Activated B cell treated with CpG ODN at 0.5 μM for 24 hours (primary cell): ENCODE measurements at regions of chr20 and their contacts with region 1.

Region 1: GRCh38 chr20:56400090-56400542 is 7.7 kb downstream of the CSTF1 start:
- DNase-seq: no peak
- ATAC-seq: peak; percentile 65
- H3K4me3 Mint-ChIP-seq: no peak overlapping the region
- H3K27ac Mint-ChIP-seq: no peak overlapping the region
- H3K4me1 Mint-ChIP-seq: peaks cover 15% of the 10 kb centered on the region
- H3K27me3 Mint-ChIP-seq: no peaks in the 10 kb centered on the region
- CTCF ChIP-seq: peak; percentile 47

Region 2: GRCh38 chr20:56247948-56248782 is 152.0 kb before region 1 on chr20 and contains the start of gene MC3R:
- CTCF ChIA-PET with region 1: no interaction called
- POLR2A ChIA-PET with region 1: no interaction called
- intact Hi-C with region 1: no loop called
- DNase-seq: no peak
- ATAC-seq: no peak
- H3K4me3 Mint-ChIP-seq: no peak within 1 kb of the TSS
- H3K27ac Mint-ChIP-seq: no peak within 1 kb of the TSS
- H3K4me1 Mint-ChIP-seq: no peaks in the 10 kb centered on the region
- H3K27me3 Mint-ChIP-seq: peaks cover 32% of the 10 kb centered on the region
- CTCF ChIP-seq: no peak
- total RNA-seq, gene MC3R: not detected in 2 replicates

Region 3: GRCh38 chr20:56373940-56374339 is 26.2 kb before region 1 on chr20:
- CTCF ChIA-PET with region 1: no interaction called
- POLR2A ChIA-PET with region 1: no interaction called
- intact Hi-C with region 1: no loop called
- DNase-seq: no peak
- ATAC-seq: no peak
- H3K4me3 Mint-ChIP-seq: no peak overlapping the region
- H3K27ac Mint-ChIP-seq: no peak overlapping the region
- H3K4me1 Mint-ChIP-seq: no peaks in the 10 kb centered on the region
- H3K27me3 Mint-ChIP-seq: no peaks in the 10 kb centered on the region
- CTCF ChIP-seq: no peak

Region 4: GRCh38 chr20:56504373-56505005 is 104.4 kb after region 1 on chr20:
- CTCF ChIA-PET with region 1: no interaction called
- POLR2A ChIA-PET with region 1: no interaction called
- intact Hi-C with region 1: loop called (anchors 1 kb)
- DNase-seq: no peak
- ATAC-seq: no peak
- H3K4me3 Mint-ChIP-seq: no peak overlapping the region
- H3K27ac Mint-ChIP-seq: no peak overlapping the region
- H3K4me1 Mint-ChIP-seq: no peaks in the 10 kb centered on the region
- H3K27me3 Mint-ChIP-seq: no peaks in the 10 kb centered on the region
- CTCF ChIP-seq: no peak

Region 5: GRCh38 chr20:56702931-56703719 is 303.0 kb after region 1 on chr20:
- CTCF ChIA-PET with region 1: no interaction called
- POLR2A ChIA-PET with region 1: no interaction called
- intact Hi-C with region 1: no loop called
- DNase-seq: no peak
- ATAC-seq: no peak
- H3K4me3 Mint-ChIP-seq: no peak overlapping the region
- H3K27ac Mint-ChIP-seq: no peak overlapping the region
- H3K4me1 Mint-ChIP-seq: no peaks in the 10 kb centered on the region
- H3K27me3 Mint-ChIP-seq: peaks cover 6% of the 10 kb centered on the region
- CTCF ChIP-seq: no peak